ENCODE measurements at regions of chr2 and their contacts with region 1.

Region 1: DNA sequence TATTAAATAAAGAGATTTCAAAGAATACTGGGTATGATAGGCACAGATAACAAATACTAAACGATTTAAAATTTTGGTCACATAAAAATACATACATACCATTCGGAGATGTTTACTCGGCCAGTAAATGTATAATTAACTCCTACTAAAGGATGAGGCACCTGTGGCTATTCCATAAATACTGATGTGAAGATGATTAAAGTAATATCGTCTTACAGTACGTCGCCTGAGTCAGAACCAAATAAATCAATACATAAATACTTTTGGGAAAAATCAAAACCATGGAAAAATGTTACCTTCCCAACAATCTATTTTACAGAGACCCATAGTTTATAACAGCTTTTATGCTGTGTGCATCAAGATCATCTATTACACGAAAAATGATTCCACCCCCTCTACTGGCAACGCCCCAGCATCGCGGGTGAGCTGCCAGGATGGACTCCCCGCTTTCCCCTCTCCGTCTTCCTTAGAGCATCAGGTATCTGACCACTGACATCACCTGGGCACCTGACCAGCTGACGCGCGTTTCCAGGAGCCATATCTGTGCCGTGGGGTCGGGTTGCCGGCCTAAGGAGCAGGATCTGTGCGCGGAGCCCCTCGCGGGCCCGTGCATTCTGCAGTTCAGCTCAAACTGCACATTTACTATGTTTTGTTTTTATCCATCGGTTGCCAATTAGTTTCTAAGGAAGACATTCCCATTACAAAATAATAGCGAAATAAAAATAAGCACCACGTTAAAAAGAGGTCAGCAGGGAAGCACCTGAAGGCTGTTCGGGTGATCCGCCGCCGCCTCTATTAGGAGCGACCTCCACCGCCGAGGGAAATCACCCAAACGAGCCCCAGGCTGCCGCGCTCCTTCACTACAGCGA is 901 bp downstream of the ICA1L start:
- DNase-seq: no peak

Region 2: GRCh38 chr2:202588647-202589581 is 281.8 kb before region 1 on chr2:
- intact Hi-C with region 1: loop called (anchors 5 kb)
- DNase-seq: peak; percentile 80

Region 3: GRCh38 chr2:202634556-202635427 is 235.9 kb before region 1 on chr2 and contains the start of gene FAM117B:
- intact Hi-C with region 1: loop called (anchors 5 kb)
- DNase-seq: peak; percentile 98
- total RNA-seq, gene FAM117B: 1.2 TPM

Region 4: DNA sequence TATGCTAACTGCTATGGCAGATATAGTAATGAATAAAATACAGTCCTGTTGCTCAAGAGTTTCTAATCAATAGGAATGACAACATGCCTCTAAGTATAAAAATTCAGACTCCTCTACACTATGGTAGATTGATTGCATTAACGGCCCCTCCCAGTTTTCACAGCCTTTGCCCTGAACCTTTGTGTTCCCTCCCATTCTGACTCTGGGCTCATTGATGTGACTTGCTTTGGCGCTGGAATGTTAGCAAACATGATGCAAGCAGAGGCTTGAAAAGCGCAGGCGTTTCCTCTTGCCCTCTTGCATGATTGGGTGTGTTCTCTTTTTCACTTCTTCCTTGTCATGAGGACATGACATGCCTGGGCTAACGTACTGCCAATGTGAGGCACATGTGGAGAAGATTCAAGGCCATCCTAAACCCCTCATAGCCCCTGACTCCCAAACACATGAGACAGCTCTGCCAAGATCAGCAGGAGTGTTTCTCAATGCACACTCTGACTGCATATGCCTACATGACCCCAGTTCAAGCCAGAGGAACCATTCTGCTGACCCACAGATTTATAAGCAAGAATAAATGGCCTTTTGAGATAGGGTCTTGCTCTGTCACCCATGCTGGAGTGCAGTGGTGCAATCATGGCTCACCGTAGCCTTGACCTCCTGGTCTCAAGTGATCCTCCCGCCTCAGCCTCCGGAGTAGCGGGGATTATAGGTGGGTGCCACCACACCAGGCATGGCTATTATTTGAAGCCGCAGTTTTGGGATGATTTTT is 786.0 kb after region 1 on chr2:
- intact Hi-C with region 1: no loop called
- DNase-seq: no peak